CD8-positive, alpha-beta T cell (primary cell): ENCODE measurements at regions of chr1 and their contacts with region 1.

Region 1: DNA sequence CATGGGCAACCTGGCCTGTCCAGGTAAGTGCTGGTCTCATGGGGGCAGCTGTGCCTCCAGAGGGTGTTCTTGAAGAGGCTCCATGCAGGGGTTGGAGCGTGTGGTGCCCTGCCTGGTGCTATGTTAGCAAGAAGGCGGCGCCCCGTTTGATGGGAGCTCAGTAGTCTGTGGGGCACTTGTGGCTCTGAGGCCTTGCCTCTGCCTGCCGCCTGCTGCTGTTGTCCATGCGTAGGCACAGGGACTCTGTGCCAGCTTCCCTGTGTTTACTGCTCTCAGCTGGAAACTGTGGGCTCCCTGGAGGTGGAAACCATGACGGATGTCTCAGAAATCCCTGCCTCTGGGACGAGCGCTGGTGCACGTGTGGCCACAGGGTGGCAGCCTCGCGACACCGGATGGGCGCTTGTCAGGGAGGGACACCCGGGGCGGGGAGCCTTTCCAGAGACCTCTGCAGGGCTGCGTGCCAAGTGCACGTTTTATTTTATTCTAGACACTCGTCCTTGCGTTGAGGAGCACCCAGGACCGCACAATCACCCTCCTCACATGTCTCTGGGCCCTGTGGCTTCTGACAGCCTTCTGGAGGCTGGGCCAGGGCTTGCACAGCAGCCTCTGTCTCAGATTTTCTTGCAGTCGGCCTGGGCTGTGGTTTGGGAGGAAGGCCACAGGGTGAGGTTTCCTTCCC is 27.1 kb downstream of the SNAP47 start:
- DNase-seq: peak; percentile 77 to 93 (median 90)
- ATAC-seq: peak; percentile 61
- H3K4me3 ChIP-seq: no peak overlapping the region
- H3K4me3 Mint-ChIP-seq: peak overlapping the region; percentile 64
- H3K27ac ChIP-seq: peak overlapping the region in 1 of 2 experiments; percentile 49
- H3K27ac Mint-ChIP-seq: peak overlapping the region; percentile 90
- H3K4me1 ChIP-seq: peaks cover 66% of the 10 kb centered on the region
- H3K4me1 Mint-ChIP-seq: peaks cover 74% of the 10 kb centered on the region
- H3K27me3 ChIP-seq: no peaks in the 10 kb centered on the region
- H3K27me3 Mint-ChIP-seq: no peaks in the 10 kb centered on the region
- CTCF ChIP-seq: peak; percentile 91

Region 2: DNA sequence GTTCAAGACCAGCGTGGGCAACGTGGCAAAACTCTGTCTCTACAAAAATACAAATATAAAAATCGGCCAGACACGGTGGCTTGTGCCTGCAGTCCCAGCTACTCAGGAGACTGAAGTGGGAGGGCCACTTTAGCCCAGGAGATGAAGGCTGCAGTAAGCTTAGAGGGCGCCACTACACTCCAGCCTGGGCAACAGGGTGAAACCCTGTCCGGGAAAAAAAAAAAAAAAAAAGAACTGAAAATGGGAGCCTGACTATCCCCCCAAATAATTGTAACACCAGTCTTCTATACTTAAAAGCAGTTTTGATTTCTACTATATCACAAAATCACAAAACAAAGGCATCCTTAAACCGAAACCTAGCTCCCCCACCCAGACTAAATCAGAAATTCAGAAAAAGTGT is 504.4 kb before region 1 on chr1:
- CTCF ChIA-PET with region 1: no interaction called
- POLR2A ChIA-PET with region 1: no interaction called
- intact Hi-C with region 1: no loop called
- DNase-seq: no peak
- ATAC-seq: no peak
- H3K4me3 ChIP-seq: no peak overlapping the region
- H3K4me3 Mint-ChIP-seq: no peak overlapping the region
- H3K27ac ChIP-seq: no peak overlapping the region
- H3K27ac Mint-ChIP-seq: no peak overlapping the region
- H3K4me1 ChIP-seq: no peaks in the 10 kb centered on the region
- H3K4me1 Mint-ChIP-seq: no peaks in the 10 kb centered on the region
- H3K27me3 ChIP-seq: no peaks in the 10 kb centered on the region
- H3K27me3 Mint-ChIP-seq: peaks cover 7% of the 10 kb centered on the region
- CTCF ChIP-seq: no peak

Region 3: DNA sequence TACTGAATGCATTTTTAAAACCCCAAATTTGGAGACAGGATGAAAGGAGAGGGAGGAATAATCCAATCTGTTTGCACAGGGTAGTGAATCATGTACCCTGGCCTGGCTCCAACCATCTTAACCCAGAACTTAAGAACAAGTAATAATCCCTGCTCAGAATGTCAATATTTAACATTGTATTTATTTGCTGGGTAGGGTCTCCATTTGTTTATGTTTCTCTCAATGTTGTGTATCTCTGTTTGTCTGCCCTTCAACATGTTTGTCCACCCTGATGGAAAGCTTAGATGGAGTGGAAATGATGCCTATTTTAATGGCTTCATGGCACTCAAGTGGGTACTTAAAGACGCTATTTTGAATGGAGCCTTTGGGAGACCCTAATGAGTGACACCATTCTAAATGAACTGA is 389.6 kb before region 1 on chr1:
- CTCF ChIA-PET with region 1: no interaction called
- POLR2A ChIA-PET with region 1: no interaction called
- intact Hi-C with region 1: no loop called
- DNase-seq: no peak
- ATAC-seq: no peak
- H3K4me3 ChIP-seq: no peak overlapping the region
- H3K4me3 Mint-ChIP-seq: no peak overlapping the region
- H3K27ac ChIP-seq: no peak overlapping the region
- H3K27ac Mint-ChIP-seq: no peak overlapping the region
- H3K4me1 ChIP-seq: no peaks in the 10 kb centered on the region
- H3K4me1 Mint-ChIP-seq: no peaks in the 10 kb centered on the region
- H3K27me3 ChIP-seq: no peaks in the 10 kb centered on the region
- H3K27me3 Mint-ChIP-seq: peaks cover 20% of the 10 kb centered on the region
- CTCF ChIP-seq: no peak

Region 4: DNA sequence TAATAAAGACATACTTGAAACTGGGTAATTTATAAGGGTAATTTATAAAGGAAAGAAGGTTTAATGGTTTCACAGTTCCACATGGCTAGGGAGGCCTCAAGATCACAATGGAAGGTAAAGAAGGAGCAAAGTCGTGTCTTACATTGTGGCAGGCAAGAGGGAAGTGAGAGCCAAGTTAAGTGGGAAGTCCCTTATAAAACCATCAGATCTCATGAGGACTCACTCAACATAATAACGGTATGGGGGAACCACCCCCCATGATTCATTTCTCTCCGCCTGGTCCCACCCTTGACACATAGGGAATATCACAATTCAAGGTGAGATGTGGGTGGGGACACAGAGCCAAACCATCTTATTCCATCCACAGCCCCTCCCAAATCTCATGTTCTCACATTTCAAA is 275.8 kb before region 1 on chr1:
- CTCF ChIA-PET with region 1: interaction called, 3 read pairs
- POLR2A ChIA-PET with region 1: no interaction called
- intact Hi-C with region 1: loop called (anchors 1 kb)
- DNase-seq: no peak
- ATAC-seq: no peak
- H3K4me3 ChIP-seq: no peak overlapping the region
- H3K4me3 Mint-ChIP-seq: no peak overlapping the region
- H3K27ac ChIP-seq: no peak overlapping the region
- H3K27ac Mint-ChIP-seq: no peak overlapping the region
- H3K4me1 ChIP-seq: no peaks in the 10 kb centered on the region
- H3K4me1 Mint-ChIP-seq: no peaks in the 10 kb centered on the region
- H3K27me3 ChIP-seq: no peaks in the 10 kb centered on the region
- H3K27me3 Mint-ChIP-seq: peaks cover 1% of the 10 kb centered on the region
- CTCF ChIP-seq: no peak

Region 5: DNA sequence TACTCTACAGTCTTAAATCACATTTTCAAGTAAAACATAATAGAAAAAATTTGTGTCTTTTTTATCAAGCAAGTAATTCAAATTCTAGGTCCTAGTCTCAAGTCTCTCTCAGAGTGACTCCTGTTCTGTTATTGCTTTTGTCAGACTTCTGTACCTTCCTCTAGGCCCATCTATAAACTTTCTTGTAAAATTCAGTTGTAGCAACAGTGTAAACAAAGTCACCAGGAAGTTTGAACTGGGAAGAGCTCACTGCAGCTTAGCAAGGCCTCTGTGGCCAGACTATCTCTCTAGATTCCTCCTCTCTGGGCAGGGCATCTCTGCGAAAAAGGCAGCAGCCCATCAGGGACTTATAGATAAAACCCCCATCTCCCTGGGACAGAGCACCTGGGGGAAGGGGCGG is 212.5 kb before region 1 on chr1:
- CTCF ChIA-PET with region 1: no interaction called
- POLR2A ChIA-PET with region 1: no interaction called
- intact Hi-C with region 1: no loop called
- DNase-seq: no peak
- ATAC-seq: no peak
- H3K4me3 ChIP-seq: no peak overlapping the region
- H3K4me3 Mint-ChIP-seq: no peak overlapping the region
- H3K27ac ChIP-seq: no peak overlapping the region
- H3K27ac Mint-ChIP-seq: no peak overlapping the region
- H3K4me1 ChIP-seq: no peaks in the 10 kb centered on the region
- H3K4me1 Mint-ChIP-seq: no peaks in the 10 kb centered on the region
- H3K27me3 ChIP-seq: no peaks in the 10 kb centered on the region
- H3K27me3 Mint-ChIP-seq: peaks cover 12% of the 10 kb centered on the region
- CTCF ChIP-seq: no peak

Region 6: GRCh38 chr1:227776331-227776771 is 14.0 kb after region 1 on chr1:
- CTCF ChIA-PET with region 1: interaction called, 36 read pairs
- POLR2A ChIA-PET with region 1: interaction called, 19 read pairs
- intact Hi-C with region 1: loop called in 1 of 2 experiments (anchors 1 kb)
- DNase-seq: peak in 2 of 9 experiments; percentile 23 to 36
- ATAC-seq: no peak
- H3K4me3 ChIP-seq: no peak overlapping the region
- H3K4me3 Mint-ChIP-seq: no peak overlapping the region
- H3K27ac ChIP-seq: no peak overlapping the region
- H3K27ac Mint-ChIP-seq: no peak overlapping the region
- H3K4me1 ChIP-seq: peaks cover 35% of the 10 kb centered on the region
- H3K4me1 Mint-ChIP-seq: peaks cover 33% of the 10 kb centered on the region
- H3K27me3 ChIP-seq: no peaks in the 10 kb centered on the region
- H3K27me3 Mint-ChIP-seq: no peaks in the 10 kb centered on the region
- CTCF ChIP-seq: no peak

Region 7: GRCh38 chr1:227886993-227887696 is 124.8 kb after region 1 on chr1:
- CTCF ChIA-PET with region 1: interaction called, 4 read pairs
- POLR2A ChIA-PET with region 1: interaction called, 12 read pairs
- intact Hi-C with region 1: loop called (anchors 5 kb)
- DNase-seq: peak in 7 of 9 experiments; percentile 21 to 68 (median 43)
- ATAC-seq: peak; percentile 41
- H3K4me3 ChIP-seq: peak overlapping the region; percentile 22 to 48
- H3K4me3 Mint-ChIP-seq: peak overlapping the region; percentile 71
- H3K27ac ChIP-seq: no peak overlapping the region
- H3K27ac Mint-ChIP-seq: peak overlapping the region; percentile 83
- H3K4me1 ChIP-seq: peaks cover 59% of the 10 kb centered on the region
- H3K4me1 Mint-ChIP-seq: peaks cover 41% of the 10 kb centered on the region
- H3K27me3 ChIP-seq: no peaks in the 10 kb centered on the region
- H3K27me3 Mint-ChIP-seq: no peaks in the 10 kb centered on the region
- CTCF ChIP-seq: no peak

Region 8: DNA sequence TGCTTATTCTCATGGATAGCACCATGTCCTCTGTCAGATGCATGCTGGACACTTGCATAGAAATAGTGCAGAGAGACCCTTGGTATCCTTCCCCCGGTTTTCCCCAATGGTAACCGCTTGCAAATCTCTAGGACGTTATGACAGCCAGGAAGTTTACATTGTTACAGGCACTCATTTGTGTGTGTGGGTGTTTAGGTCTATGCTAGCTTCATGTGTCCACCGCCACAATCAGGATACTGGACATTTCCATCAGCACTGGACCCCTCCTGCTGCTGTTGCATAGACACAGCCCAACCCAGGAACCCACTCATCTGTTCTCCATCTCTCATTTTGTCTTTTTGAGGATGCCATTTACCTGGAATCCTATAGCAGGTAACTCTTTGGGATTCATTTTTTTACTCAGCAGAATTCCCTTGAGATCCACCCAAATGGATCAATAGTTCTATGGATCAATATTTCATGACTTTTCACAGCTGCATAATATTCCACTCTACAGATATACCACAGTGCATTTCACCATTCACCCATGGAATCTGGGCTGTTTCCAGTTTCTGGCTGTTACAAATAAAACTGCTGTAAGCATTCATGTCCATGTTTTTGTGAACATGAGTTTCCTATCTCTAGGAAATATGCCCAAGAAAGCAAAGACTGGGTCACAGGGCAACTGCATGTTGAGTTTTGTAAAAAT is 191.9 kb after region 1 on chr1:
- CTCF ChIA-PET with region 1: interaction called, 264 read pairs
- POLR2A ChIA-PET with region 1: interaction called, 5 read pairs
- intact Hi-C with region 1: loop called (anchors 1 to 2 kb)
- DNase-seq: no peak
- ATAC-seq: peak; percentile 13
- H3K4me3 ChIP-seq: no peak overlapping the region
- H3K4me3 Mint-ChIP-seq: no peak overlapping the region
- H3K27ac ChIP-seq: no peak overlapping the region
- H3K27ac Mint-ChIP-seq: no peak overlapping the region
- H3K4me1 ChIP-seq: no peaks in the 10 kb centered on the region
- H3K4me1 Mint-ChIP-seq: peaks cover 2% of the 10 kb centered on the region
- H3K27me3 ChIP-seq: peaks cover 3 to 5% of the 10 kb centered on the region in 2 experiments
- H3K27me3 Mint-ChIP-seq: peaks cover 34% of the 10 kb centered on the region
- CTCF ChIP-seq: no peak